CD4-positive, alpha-beta memory T cell (primary cell): ENCODE measurements at regions of chr4 and their contacts with region 1.

Region 1: DNA sequence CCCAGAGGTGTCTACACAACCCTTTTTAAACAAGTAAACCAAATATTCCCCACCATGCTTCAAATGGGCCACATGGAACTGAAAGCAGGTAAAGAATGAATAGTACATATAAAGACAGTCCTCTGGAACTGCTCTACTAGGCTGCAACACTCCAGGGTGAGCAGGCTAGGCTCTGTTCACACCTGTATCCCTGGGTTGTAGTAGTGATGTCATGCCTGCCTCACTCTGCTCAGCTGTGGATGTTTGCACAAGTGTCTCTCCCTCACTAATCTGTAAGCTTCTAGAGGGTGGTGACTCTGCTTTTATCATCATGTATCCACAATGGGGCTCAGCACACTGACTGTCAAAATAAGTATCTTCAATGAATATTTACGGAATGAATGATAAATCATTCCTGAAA is 20.4 kb downstream of the LEF1 start:
- DNase-seq: peak in 2 of 5 donors; percentile 28 to 72
- H3K4me3 ChIP-seq: no peak overlapping the region
- H3K4me3 Mint-ChIP-seq: peak overlapping the region in 7 of 8 donors; percentile 22 to 75 (median 49)
- H3K27ac ChIP-seq: peak overlapping the region; percentile 12
- H3K27ac Mint-ChIP-seq: peak overlapping the region; percentile 8 to 86 (median 40)
- H3K4me1 ChIP-seq: peaks cover 96% of the 10 kb centered on the region
- H3K4me1 Mint-ChIP-seq: peaks cover 77 to 93% (median 84%) of the 10 kb centered on the region in 4 donors
- H3K27me3 ChIP-seq: no peaks in the 10 kb centered on the region
- H3K27me3 Mint-ChIP-seq: peaks cover 0 to 1% of the 10 kb centered on the region in 2 donors

Region 2: DNA sequence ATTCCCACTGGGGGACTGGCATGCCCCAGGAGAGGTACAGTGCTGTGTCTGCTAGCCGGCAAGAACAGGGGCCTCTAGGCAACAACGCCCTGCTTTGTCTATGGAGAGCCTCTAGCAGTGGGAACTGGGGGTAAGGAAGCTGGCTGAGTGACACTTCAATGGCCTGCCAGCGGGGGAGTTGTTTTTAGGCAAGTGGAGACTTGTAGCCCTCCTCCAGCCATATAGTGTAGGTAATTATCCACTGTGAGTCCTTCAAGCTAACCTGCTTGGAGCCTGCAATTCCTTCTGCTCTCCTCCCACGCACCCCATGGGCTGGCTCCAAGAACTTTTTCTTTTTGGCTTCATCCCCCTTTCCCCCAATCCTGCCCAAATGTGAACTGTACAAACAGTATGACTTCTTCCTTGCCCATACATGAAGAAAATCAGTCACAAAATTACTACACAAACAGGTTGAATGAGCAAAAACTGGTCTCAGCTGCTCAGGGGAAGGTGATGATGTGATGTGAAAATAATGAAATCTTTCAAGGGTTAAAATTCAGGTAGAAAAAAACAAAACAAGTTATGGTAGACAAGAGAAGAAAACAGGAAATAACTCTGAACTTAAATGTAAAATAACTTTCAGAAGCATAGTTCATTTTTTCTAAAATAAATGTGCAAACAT is 12.6 kb before region 1 on chr4:
- CTCF ChIA-PET with region 1: no interaction called
- POLR2A ChIA-PET with region 1: interaction called, 10 read pairs
- intact Hi-C with region 1: loop called (anchors 2 kb)
- DNase-seq: no peak
- H3K4me3 ChIP-seq: peak overlapping the region in 1 of 2 donors; percentile 13
- H3K4me3 Mint-ChIP-seq: peak overlapping the region; percentile 38 to 82 (median 62)
- H3K27ac ChIP-seq: no peak overlapping the region
- H3K27ac Mint-ChIP-seq: peak overlapping the region; percentile 37 to 86 (median 75)
- H3K4me1 ChIP-seq: peaks cover 97% of the 10 kb centered on the region
- H3K4me1 Mint-ChIP-seq: peaks cover 54 to 91% (median 70%) of the 10 kb centered on the region in 4 donors
- H3K27me3 ChIP-seq: no peaks in the 10 kb centered on the region
- H3K27me3 Mint-ChIP-seq: no peaks in the 10 kb centered on the region

Region 3: DNA sequence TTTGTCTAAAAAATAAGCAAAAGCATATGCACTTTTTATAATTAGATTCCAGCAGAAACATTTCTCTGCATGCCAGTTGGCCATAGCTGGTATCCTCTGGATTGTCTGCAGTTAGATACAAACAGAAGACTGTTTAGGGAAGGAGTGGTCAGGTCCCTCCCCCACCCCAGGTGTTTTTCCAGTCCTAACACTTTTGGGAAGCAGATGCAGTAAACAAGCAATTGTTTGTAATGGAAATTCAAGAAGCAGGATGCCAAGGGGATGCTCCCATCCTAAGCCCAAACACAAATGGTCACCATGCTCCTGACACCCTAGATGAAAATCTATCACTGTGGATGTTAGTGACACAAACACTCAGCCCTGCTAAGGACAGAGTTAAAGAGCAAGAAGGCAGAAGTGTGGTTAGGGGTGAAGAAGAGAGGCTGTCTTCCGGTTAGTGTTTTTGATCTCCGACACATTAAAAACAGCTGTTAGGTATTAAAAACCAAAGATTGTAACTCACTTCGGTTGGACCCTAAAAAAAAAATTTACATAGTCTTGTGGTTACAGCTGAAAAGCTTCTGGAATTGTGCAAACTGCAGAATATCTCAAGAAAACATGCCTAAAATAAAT is 12.5 kb after region 1 on chr4:
- CTCF ChIA-PET with region 1: interaction called, 4 read pairs
- POLR2A ChIA-PET with region 1: interaction called, 13 read pairs
- intact Hi-C with region 1: loop called (anchors 1 kb)
- DNase-seq: peak; percentile 38 to 50 (median 47)
- H3K4me3 ChIP-seq: peak overlapping the region; percentile 19 to 81
- H3K4me3 Mint-ChIP-seq: peak overlapping the region; percentile 85 to 98 (median 88)
- H3K27ac ChIP-seq: peak overlapping the region; percentile 27
- H3K27ac Mint-ChIP-seq: peak overlapping the region; percentile 19 to 89 (median 75)
- H3K4me1 ChIP-seq: peaks cover 77% of the 10 kb centered on the region
- H3K4me1 Mint-ChIP-seq: peaks cover 30 to 84% (median 47%) of the 10 kb centered on the region in 4 donors
- H3K27me3 ChIP-seq: no peaks in the 10 kb centered on the region
- H3K27me3 Mint-ChIP-seq: no peaks in the 10 kb centered on the region